Spleen (tissue), 13 donors: ENCODE measurements at regions of chr20 and their contacts with region 1.

Region 1: GRCh38 chr20:4607287-4607713 is 114.4 kb upstream of the PRND start:
- DNase-seq: no peak
- H3K4me3 ChIP-seq: no peak overlapping the region
- H3K27ac ChIP-seq: no peak overlapping the region
- H3K4me1 ChIP-seq: peaks cover 0 to 8% (median 6%) of the 10 kb centered on the region in 6 donors
- H3K27me3 ChIP-seq: peaks cover 0 to 10% (median 0%) of the 10 kb centered on the region in 7 donors
- CTCF ChIP-seq: peak; percentile 82 to 96 (median 91)
- POLR2A ChIP-seq: no peak

Region 2: GRCh38 chr20:4720041-4720976 is 113.0 kb after region 1 on chr20:
- intact Hi-C with region 1: loop called (anchors 2 kb)
- DNase-seq: peak; percentile 93
- H3K4me3 ChIP-seq: peak overlapping the region in 1 of 8 donors; percentile 11
- H3K27ac ChIP-seq: peak overlapping the region; percentile 70 to 94 (median 83)
- H3K4me1 ChIP-seq: peaks cover 0 to 23% (median 18%) of the 10 kb centered on the region in 6 donors
- H3K27me3 ChIP-seq: no peaks in the 10 kb centered on the region
- CTCF ChIP-seq: peak; percentile 46 to 90 (median 75)
- POLR2A ChIP-seq: no peak